Cardiac septum (tissue), 1 donor: ENCODE measurements at regions of chr1 and their contacts with region 1.

Region 1: GRCh38 chr1:212284744-212285684 is at the start of gene PPP2R5A:
- DNase-seq: peak; percentile 100
- total RNA-seq, gene PPP2R5A: 68.1 TPM

Region 2: GRCh38 chr1:212062832-212063438 is 222.1 kb before region 1 on chr1:
- intact Hi-C with region 1: no loop called
- DNase-seq: no peak

Region 3: GRCh38 chr1:212077051-212077450 is 208.0 kb before region 1 on chr1:
- intact Hi-C with region 1: loop called (anchors 1 kb)
- DNase-seq: no peak

Region 4: DNA sequence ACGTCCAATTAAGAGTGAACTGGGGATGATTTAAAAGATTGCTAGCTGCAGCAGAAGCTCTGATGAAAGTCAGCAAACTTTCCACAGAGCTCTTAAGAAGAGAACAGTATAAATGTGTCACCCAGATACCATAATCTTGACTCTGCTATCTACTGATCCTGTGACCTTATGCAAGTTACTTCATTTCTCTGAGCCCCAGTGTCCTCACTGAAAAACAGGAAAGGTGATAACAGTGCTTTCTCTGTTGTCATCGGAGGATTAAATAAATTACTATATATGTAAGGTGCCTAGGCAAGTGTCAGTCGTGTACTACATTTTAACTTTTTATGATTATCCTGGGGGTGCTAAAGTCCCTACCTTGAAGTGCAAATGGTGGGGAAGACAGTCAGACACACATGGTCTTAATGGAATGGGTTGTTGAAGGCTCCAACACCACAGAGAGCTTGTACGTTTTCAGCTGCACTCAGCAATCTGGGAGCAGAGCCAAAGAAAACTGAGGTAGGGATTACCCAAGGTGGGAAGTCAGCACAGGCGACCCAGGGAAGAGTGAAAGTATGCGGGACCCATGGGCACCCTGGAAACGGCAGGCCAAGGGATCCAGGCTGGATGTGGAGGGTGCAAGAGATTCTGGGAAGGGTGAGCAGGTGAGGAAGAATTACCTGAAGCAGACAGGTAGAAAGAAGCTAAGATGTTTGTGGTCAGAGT is 166.7 kb before region 1 on chr1:
- intact Hi-C with region 1: loop called (anchors 1 kb)
- DNase-seq: no peak

Region 5: GRCh38 chr1:212242288-212242984 is 42.6 kb before region 1 on chr1:
- intact Hi-C with region 1: loop called (anchors 2 kb)
- DNase-seq: no peak

Region 6: DNA sequence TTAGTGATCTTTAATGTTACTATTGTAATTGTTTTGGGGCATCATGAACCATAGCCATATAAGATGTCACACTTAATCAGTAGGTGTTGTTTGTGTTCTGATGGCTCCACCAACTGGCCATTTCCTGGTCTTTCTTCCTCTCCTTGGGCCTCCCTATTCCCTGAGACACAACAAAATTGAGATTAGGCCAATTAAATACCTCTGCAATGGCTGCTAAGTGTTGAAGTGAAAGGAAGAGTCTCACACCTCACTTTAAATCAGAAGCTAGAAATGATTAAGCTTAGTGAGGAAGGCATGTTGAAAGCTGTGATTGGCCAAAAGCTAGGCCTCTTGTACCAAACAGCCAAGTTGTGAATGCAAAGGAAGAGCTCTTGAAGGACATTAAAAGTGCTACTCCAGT is 30.9 kb after region 1 on chr1:
- intact Hi-C with region 1: no loop called
- DNase-seq: no peak